ENCODE measurements at regions of chr20 and their contacts with region 1.

Region 1: DNA sequence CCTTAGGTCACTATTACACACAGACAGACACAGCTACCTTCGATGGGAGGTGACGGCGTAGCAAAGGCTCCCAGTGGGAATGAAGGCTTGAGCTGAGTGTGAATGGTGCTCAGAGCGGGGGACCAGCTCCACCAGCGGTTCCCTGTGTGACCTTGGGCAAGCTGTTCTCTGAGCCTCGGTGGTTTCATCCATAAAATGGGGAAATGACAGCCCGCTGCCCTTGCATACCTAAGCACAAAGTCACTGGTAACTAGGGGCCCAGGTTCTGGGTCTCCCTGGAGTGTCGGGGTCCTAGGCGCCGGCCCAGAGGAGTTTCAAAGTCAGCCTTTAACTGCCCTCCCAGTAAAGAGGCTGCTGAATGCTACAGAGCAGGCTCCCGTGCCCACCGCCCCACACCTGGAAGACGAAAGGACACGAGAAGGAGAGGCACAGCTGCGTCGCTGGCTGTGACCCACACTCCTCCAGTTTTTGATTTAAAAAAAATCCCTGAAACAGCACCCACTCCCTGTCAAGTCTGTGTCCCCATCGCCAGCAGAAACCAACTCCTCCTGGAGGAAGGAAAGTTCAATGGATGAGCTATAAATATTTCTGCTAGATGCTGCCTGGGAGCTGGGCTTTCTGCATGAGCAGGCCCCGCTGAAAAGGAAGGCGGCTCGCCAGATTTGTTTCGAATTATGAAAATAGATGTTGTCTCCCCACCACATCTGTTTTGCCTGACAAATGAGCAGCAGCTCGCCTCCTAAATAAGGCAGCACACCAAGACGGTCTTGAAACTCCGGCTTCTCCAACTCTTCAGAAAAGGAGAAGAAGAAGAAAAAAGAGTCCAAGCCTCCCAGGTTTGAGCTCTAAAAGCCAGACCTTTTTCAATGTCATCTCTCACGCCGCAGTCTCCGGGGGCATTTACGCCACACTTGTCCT is 27.4 kb downstream of the PMEPA1 start:
- DNase-seq: no peak
- H3K4me3 ChIP-seq: no peak overlapping the region
- H3K27ac ChIP-seq: no peak overlapping the region
- H3K4me1 ChIP-seq: peaks cover 4 to 30% (median 28%) of the 10 kb centered on the region in 4 experiments
- H3K27me3 ChIP-seq: no peaks in the 10 kb centered on the region

Region 2: DNA sequence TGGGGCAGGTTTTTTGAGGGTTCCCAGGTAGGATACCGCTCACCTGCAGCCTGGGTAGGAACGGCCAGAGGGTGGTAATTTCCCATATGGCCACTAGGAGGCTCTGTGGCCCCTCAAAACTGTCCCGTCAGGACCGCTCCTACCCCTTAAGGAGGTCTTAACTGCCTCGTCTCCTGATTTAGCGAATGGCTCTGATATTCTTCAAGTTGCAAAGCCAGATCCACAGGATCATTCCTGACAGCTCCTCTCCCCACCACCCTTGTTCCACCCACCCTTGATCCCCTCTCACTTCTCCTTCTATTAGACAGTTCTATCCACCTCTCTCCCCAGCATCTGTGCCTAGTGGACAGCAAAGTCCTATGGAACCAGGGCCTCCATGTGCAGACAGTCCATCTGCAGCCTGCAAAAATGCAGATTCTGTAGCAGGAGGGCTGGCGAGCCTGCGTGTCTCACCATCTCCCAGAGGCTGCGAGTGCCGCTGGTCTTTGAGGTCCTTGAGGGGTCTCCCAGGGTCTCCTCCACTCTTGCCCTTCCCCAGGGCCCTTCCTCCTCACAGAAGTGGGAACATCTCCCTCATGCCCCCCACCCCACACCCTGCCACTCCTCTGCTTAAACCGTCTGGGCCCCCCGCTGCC is 28.0 kb before region 1 on chr20:
- CTCF ChIA-PET with region 1: interaction called, 11 read pairs
- POLR2A ChIA-PET with region 1: no interaction called
- DNase-seq: peak; percentile 60 to 74 (median 69)
- H3K4me3 ChIP-seq: no peak overlapping the region
- H3K27ac ChIP-seq: no peak overlapping the region
- H3K4me1 ChIP-seq: no peaks in the 10 kb centered on the region
- H3K27me3 ChIP-seq: peaks cover 0 to 4% (median 0%) of the 10 kb centered on the region in 5 experiments

Region 3: DNA sequence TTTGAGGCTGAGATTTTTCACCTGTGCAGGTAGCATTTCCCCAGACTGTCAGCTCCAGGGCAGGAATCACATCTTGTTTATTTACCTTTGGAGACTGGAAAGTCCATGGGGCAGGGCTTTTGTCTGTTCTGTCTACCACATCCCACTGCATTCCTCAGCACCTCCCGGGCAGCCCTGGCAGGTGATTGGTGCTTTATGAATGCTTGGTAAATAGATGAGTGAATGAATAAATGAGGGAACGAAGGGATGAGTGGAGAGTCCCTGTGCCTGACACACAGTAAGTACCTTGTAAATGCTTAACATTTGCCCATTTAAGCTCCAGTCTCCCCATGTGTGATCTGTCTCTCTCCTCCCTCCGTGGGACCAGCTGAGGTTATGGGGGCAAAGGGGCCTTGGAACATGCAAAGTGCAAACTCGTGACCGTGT is 97.0 kb after region 1 on chr20:
- CTCF ChIA-PET with region 1: no interaction called
- POLR2A ChIA-PET with region 1: no interaction called
- DNase-seq: no peak
- H3K4me3 ChIP-seq: no peak overlapping the region
- H3K27ac ChIP-seq: no peak overlapping the region
- H3K4me1 ChIP-seq: no peaks in the 10 kb centered on the region
- H3K27me3 ChIP-seq: peaks cover 0 to 2% (median 0%) of the 10 kb centered on the region in 5 experiments

Measured in common myeloid progenitor, CD34-positive (primary cell).